HCT116 (cell line): ENCODE measurements at regions of chr15 and their contacts with region 1.

Region 1: DNA sequence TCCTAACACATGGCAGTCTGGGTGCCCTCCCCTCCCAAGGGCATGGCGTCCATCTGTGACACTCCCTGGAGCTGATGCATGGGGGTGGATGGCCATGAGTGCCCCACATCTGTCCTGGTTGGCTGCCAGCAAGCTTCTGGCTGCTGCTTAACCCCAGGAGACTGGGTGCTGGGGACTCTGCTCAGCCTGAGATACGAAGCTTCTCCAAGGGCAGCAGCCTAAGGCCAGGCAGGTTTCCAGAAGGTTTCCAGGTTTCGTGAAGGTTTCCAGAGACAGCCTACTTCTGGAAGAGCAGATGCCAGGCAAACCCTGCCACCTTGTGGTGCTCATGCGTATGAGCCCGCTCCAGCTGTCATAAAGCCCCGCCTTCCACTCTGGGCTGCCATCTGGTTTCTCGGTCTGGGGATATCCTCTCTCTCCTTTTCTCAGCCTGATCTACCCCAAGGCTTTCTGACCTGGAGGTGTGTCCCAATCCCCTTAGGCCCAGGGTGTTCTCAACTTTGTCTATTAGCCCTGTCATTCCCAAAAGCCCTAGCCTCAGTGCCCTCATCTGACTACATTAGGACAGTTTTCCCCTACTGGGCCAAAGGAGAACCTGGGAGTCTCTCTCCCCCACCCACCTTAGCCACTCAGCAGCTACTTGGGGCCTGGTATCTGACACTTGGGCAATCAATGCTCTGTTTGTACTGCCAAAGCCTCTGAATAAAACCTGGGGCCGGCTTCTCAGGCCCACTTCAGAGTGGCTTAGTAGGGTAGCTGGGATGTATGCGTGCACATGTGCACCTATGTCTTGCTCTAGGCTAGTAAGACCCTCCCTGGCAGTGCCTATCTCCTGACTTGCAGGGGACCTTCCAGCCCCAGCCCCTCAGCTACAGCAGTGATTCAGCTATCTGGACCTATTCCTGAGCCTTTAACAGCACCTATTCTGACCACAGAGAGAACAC is 12.0 kb downstream of the MRPL46 start:
- DNase-seq: peak; percentile 48
- ATAC-seq: peak; percentile 90
- H3K4me3 ChIP-seq: no peak overlapping the region
- H3K27ac ChIP-seq: no peak overlapping the region
- H3K4me1 ChIP-seq: peaks cover 0 to 7% of the 10 kb centered on the region in 2 experiments; a peak in 2 of 4 replicates
- H3K27me3 ChIP-seq: no peaks in the 10 kb centered on the region
- CTCF ChIP-seq: peak; percentile 48 to 90 (median 81); a peak in 5 of 6 replicates
- POLR2A ChIP-seq: no peak
- RAD21 ChIP-seq: peak; percentile 64

Region 2: GRCh38 chr15:88246666-88247446 is 208.3 kb before region 1 on chr15:
- CTCF ChIA-PET with region 1: interaction called, 11 read pairs
- POLR2A ChIA-PET with region 1: no interaction called
- RAD21 ChIA-PET with region 1: no interaction called
- intact Hi-C with region 1: loop called (anchors 1 kb)
- DNase-seq: peak; percentile 53
- ATAC-seq: peak; percentile 89
- H3K4me3 ChIP-seq: no peak overlapping the region; a peak in 1 of 4 replicates
- H3K27ac ChIP-seq: no peak overlapping the region
- H3K4me1 ChIP-seq: peaks cover 0 to 5% of the 10 kb centered on the region in 2 experiments; a peak in 2 of 4 replicates
- H3K27me3 ChIP-seq: no peaks in the 10 kb centered on the region
- CTCF ChIP-seq: peak; percentile 67 to 94 (median 89)
- POLR2A ChIP-seq: no peak
- RAD21 ChIP-seq: peak; percentile 64

Region 3: DNA sequence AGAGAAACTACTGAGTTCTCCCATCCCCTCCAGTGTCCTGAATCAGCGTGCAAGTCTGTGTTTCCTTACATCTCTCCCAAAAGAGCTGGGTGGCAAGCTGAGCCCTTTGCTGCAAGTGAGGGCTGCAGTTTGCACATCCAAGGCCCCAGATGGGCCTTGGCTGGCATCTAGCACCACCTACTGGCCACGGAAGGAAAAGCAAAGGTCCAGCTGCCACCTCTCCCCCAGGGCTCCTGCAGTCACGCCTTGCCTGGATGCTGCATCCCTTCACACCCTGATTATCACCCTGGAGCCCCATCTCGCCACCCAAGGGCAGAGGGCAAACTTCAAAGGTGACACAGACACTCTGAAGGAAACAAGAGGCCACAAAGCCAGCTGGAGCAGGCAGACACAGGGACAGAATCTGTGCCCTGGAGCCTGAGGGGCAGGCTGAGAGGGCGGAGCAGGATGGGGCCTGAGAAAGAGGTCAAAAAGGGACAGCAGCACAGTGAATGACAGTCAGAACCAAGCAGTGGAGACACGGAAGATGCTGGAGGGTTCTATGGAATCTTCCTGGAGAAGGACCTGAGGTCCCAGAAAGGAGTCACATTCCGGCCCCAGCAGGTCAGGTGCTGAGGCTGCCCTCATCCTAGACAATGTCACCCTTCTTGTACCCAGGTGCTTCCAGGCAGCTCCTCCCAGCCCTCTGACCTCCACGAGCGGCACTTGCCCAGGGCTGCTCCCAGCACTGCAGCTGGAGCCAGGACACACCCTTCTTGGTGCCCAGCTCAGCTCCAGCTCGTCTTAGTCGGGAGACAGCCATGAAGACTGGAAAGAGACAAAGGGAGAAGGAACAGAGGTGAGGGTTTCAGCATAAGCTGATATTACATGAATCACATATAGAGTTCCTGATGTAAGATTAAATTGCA is 180.3 kb before region 1 on chr15:
- CTCF ChIA-PET with region 1: interaction called, 4 read pairs
- POLR2A ChIA-PET with region 1: no interaction called
- RAD21 ChIA-PET with region 1: no interaction called
- intact Hi-C with region 1: loop called (anchors 5 kb)
- DNase-seq: peak; percentile 23
- ATAC-seq: peak; percentile 95
- H3K4me3 ChIP-seq: no peak overlapping the region
- H3K27ac ChIP-seq: no peak overlapping the region
- H3K4me1 ChIP-seq: no peaks in the 10 kb centered on the region
- H3K27me3 ChIP-seq: peaks cover 35% of the 10 kb centered on the region; the same call in 1 of the 2 replicates
- CTCF ChIP-seq: peak; percentile 29 to 86 (median 82); a peak in 4 of 6 replicates
- POLR2A ChIP-seq: no peak
- RAD21 ChIP-seq: peak; percentile 66

Region 4: GRCh38 chr15:88385078-88385700 is 70.0 kb before region 1 on chr15:
- CTCF ChIA-PET with region 1: no interaction called
- POLR2A ChIA-PET with region 1: no interaction called
- RAD21 ChIA-PET with region 1: no interaction called
- intact Hi-C with region 1: no loop called
- DNase-seq: no peak
- ATAC-seq: no peak
- H3K4me3 ChIP-seq: no peak overlapping the region
- H3K27ac ChIP-seq: no peak overlapping the region
- H3K4me1 ChIP-seq: no peaks in the 10 kb centered on the region
- H3K27me3 ChIP-seq: peaks cover 33% of the 10 kb centered on the region
- CTCF ChIP-seq: no peak
- POLR2A ChIP-seq: no peak
- RAD21 ChIP-seq: no peak

Region 5: GRCh38 chr15:88467073-88467934 is 12.2 kb after region 1 on chr15 and contains the starts of genes MRPL46 and MRPS11:
- CTCF ChIA-PET with region 1: interaction called, 17 read pairs
- POLR2A ChIA-PET with region 1: interaction called, 3 read pairs
- RAD21 ChIA-PET with region 1: no interaction called
- intact Hi-C with region 1: no loop called
- DNase-seq: peak; percentile 81
- ATAC-seq: peak; percentile 87
- H3K4me3 ChIP-seq: peak within 1 kb of the TSS; percentile 91 to 92
- H3K27ac ChIP-seq: peak within 1 kb of the TSS; percentile 77
- H3K4me1 ChIP-seq: peaks cover 13 to 17% of the 10 kb centered on the region in 2 experiments
- H3K27me3 ChIP-seq: no peaks in the 10 kb centered on the region
- CTCF ChIP-seq: no peak
- POLR2A ChIP-seq: peak; percentile 37
- RAD21 ChIP-seq: no peak
- total RNA-seq, gene MRPL46: 30.5 TPM
- total RNA-seq, gene MRPS11: 47.4 TPM

Region 6: DNA sequence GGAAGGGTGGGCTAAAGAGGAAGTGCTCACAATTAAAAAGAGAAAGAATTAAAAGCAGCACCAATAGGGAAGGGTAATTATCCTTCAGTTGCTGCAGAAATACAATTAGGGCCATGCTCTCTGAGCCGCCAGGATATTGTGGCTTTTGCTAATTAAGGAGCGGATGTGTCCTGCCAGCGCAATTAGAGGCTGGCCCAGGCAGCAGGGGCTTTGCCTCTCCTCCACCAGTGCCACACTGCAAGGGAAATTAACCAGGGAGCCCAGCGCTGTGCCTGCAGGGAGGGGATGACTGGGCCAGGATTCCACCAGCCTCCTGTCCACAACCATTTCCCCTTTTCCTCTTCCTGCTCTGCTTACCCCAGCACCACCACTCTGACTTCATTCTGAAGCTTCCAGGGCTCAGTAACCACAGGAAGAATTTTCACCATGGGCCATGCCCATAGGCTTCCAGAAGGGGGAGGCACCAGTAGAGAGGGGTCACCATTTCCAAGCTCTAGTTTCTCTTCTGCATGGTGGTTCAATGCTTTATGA is 155.6 kb after region 1 on chr15:
- CTCF ChIA-PET with region 1: no interaction called
- POLR2A ChIA-PET with region 1: no interaction called
- RAD21 ChIA-PET with region 1: no interaction called
- intact Hi-C with region 1: no loop called
- DNase-seq: no peak
- ATAC-seq: no peak
- H3K4me3 ChIP-seq: no peak overlapping the region
- H3K27ac ChIP-seq: no peak overlapping the region
- H3K4me1 ChIP-seq: peaks cover 0 to 24% of the 10 kb centered on the region in 2 experiments; a peak in 3 of 4 replicates
- H3K27me3 ChIP-seq: peaks cover 40% of the 10 kb centered on the region
- CTCF ChIP-seq: peak in 1 of 3 experiments; percentile 28; a peak in 2 of 6 replicates
- POLR2A ChIP-seq: no peak
- RAD21 ChIP-seq: no peak